Dendritic cell treated with granulocyte-macrophage colony-stimulating factor and Interleukin-4, amounts not matched to agents 40 ng/mL and 50 ng/mL, for 4 days (primary cell): ENCODE measurements at regions of chr5 and their contacts with region 1.

Region 1: GRCh38 chr5:77486344-77486962 is 5.7 kb downstream of the WDR41 start:
- H3K4me3 Mint-ChIP-seq: no peak overlapping the region
- H3K27ac Mint-ChIP-seq: no peak overlapping the region
- H3K4me1 Mint-ChIP-seq: peaks cover 31% of the 10 kb centered on the region
- H3K27me3 Mint-ChIP-seq: no peaks in the 10 kb centered on the region

Region 2: GRCh38 chr5:77086689-77087483 is 399.6 kb before region 1 on chr5 and contains the start of gene ZBED3:
- intact Hi-C with region 1: loop called (anchors 10 kb)
- H3K4me3 Mint-ChIP-seq: peak within 1 kb of the TSS; percentile 92
- H3K27ac Mint-ChIP-seq: peak within 1 kb of the TSS; percentile 88
- H3K4me1 Mint-ChIP-seq: peaks cover 18% of the 10 kb centered on the region
- H3K27me3 Mint-ChIP-seq: no peaks in the 10 kb centered on the region

Region 3: GRCh38 chr5:77449981-77450380 is 36.5 kb before region 1 on chr5:
- intact Hi-C with region 1: loop called (anchors 5 kb)
- H3K4me3 Mint-ChIP-seq: no peak overlapping the region
- H3K27ac Mint-ChIP-seq: peak overlapping the region; percentile 51
- H3K4me1 Mint-ChIP-seq: peaks cover 16% of the 10 kb centered on the region
- H3K27me3 Mint-ChIP-seq: no peaks in the 10 kb centered on the region

Region 4: DNA sequence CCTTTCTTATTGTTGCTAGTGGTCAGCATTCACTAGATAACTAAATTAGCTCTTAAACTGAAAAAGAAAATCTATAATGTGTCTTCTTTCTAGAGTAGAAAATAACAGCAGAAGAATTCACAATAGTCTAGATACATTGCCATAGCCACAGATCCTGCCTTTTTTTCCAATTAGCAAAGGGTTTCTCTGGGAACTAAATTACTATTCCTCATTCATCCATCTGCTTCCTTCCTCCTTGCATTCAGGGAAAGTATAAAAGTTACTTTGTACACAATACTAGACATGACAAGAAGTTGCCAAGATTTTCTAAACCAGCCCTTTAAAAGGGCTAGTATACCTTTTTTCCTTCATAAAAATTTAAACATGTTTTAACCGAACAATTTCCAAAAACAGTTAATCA is 26.9 kb after region 1 on chr5:
- intact Hi-C with region 1: no loop called
- H3K4me3 Mint-ChIP-seq: no peak overlapping the region
- H3K27ac Mint-ChIP-seq: no peak overlapping the region
- H3K4me1 Mint-ChIP-seq: no peaks in the 10 kb centered on the region
- H3K27me3 Mint-ChIP-seq: no peaks in the 10 kb centered on the region